Breast epithelium (tissue), 4 donors: ENCODE measurements at regions of chr6 and their contacts with region 1.

Region 1: DNA sequence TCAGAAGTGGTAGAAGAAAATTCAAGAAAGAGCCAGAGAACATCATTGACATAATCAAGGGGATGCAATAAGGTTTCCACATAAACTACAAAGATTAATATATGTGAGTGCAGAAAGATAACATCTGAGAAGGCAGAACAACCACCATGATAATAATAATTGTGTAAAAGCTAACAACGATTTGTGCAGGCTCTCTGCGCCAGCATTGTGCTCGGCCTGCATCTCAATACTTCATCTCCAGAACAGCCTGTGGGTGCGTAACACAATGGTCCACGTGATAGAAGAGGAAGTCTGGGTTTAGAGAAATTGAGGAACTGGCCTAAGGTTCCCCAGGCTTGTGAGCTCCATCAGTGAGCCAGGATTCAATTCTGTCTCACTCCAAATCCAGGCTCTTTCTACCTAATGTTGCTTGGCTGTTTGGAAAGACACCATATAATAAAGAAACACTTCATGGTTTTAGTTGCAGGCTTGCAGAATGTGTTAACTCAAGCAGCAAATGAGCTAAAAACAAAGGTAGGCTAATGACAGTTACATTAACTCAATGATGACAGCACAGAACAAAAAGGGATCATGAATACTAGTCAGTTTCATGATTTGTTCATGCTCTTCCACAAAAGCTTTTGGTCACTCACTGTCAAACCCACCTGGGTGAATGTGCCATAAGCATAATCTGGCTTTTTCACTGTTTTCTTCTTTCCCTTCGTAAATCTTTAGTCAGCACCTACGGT is 71.2 kb downstream of the LY86 start:
- DNase-seq: no peak
- H3K4me3 ChIP-seq: no peak overlapping the region
- H3K27ac ChIP-seq: no peak overlapping the region
- H3K4me1 ChIP-seq: no peaks in the 10 kb centered on the region
- H3K27me3 ChIP-seq: no peaks in the 10 kb centered on the region
- CTCF ChIP-seq: no peak
- POLR2A ChIP-seq: no peak

Region 2: GRCh38 chr6:5135788-5136376 is 1523.9 kb before region 1 on chr6:
- intact Hi-C with region 1: loop called (anchors 5 kb)
- DNase-seq: no peak
- H3K4me3 ChIP-seq: no peak overlapping the region
- H3K27ac ChIP-seq: no peak overlapping the region
- H3K4me1 ChIP-seq: no peaks in the 10 kb centered on the region
- H3K27me3 ChIP-seq: no peaks in the 10 kb centered on the region
- CTCF ChIP-seq: peak; percentile 19 to 42 (median 26)
- POLR2A ChIP-seq: no peak

Region 3: DNA sequence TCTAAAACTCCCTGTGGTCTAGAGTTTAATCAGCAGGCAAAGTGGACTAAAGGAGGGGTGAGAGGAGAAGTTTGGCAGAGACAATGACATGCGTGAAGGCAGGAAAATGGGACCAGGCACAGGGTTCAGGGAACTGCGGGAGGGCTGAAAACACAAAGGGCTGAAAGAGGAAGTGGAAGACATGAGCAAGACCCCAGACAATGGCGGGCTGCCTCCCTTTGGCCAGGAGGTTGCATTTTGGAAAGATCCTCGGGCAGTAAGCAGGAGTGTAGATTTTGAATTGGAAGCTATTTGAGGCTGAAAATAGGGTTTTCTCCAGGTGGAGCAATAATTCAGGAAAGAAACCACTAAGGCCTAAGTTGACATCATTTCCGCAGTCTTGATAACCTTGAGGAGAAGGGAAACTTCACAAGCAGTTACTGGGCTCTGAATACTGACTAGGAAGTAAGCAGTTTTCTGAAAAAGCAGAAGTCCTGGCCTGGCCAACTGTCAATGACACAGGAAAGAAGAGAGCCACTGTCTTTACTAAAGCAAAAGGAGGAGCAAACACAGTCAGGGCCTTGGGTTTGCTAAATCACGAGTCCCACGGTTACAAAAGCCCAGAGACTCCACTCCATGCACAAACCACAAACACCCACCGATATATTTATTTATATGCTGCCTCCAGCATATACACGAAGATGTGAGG is 67.8 kb before region 1 on chr6:
- intact Hi-C with region 1: no loop called
- DNase-seq: no peak
- H3K4me3 ChIP-seq: no peak overlapping the region
- H3K27ac ChIP-seq: peak overlapping the region in 1 of 2 donors; percentile 19
- H3K4me1 ChIP-seq: no peaks in the 10 kb centered on the region
- H3K27me3 ChIP-seq: no peaks in the 10 kb centered on the region
- CTCF ChIP-seq: no peak
- POLR2A ChIP-seq: no peak

Region 4: GRCh38 chr6:6631534-6632276 is 28.1 kb before region 1 on chr6:
- intact Hi-C with region 1: no loop called
- DNase-seq: no peak
- H3K4me3 ChIP-seq: no peak overlapping the region
- H3K27ac ChIP-seq: no peak overlapping the region
- H3K4me1 ChIP-seq: no peaks in the 10 kb centered on the region
- H3K27me3 ChIP-seq: no peaks in the 10 kb centered on the region
- CTCF ChIP-seq: no peak
- POLR2A ChIP-seq: no peak

Region 5: GRCh38 chr6:6721606-6722005 is 61.8 kb after region 1 on chr6:
- intact Hi-C with region 1: loop called (anchors 2 kb)
- DNase-seq: no peak
- H3K4me3 ChIP-seq: no peak overlapping the region
- H3K27ac ChIP-seq: no peak overlapping the region
- H3K4me1 ChIP-seq: peaks cover 0 to 3% of the 10 kb centered on the region in 2 donors
- H3K27me3 ChIP-seq: no peaks in the 10 kb centered on the region
- CTCF ChIP-seq: no peak
- POLR2A ChIP-seq: no peak

Region 6: GRCh38 chr6:7254980-7255835 is 595.4 kb after region 1 on chr6:
- intact Hi-C with region 1: no loop called
- DNase-seq: no peak
- H3K4me3 ChIP-seq: no peak overlapping the region
- H3K27ac ChIP-seq: peak overlapping the region in 1 of 2 donors; percentile 39
- H3K4me1 ChIP-seq: no peaks in the 10 kb centered on the region
- H3K27me3 ChIP-seq: no peaks in the 10 kb centered on the region
- CTCF ChIP-seq: no peak
- POLR2A ChIP-seq: no peak

Region 7: DNA sequence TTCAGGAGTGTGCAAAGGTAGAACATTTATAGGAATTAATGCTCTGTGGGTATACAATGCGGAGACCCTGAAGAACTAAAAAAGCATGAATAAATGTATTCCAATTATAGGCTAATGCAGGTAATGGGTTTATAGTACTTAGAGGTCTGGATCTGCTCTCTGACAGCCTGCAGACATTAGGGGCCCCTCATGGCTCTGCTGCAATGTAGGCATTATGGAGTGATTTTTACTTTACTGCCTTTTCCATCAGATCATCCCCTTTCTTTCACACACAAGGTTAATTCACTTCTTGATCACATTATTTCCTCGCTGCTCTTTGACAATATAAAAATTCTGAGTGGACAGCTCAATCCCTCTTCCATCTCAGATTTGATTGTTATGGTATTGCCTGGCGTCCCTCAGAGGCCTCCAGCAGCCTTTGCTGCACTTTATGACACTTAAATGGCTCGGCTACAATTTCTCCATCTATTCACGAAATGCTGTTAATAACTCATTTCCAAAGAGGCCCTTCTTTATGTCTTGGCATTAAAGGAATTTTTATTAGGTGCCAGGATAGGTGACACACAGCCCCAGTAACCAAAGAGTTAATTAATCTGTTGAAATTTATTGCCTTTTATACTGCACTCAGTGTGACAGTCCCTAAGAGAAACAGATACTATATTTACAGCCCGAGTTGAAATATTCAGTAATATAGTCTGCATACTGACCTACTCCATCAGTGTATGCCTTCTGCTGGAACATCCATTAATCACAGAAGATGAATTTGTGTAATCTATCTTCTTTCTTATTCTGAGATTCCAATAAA is 1809.0 kb after region 1 on chr6:
- intact Hi-C with region 1: no loop called
- DNase-seq: no peak
- H3K4me3 ChIP-seq: no peak overlapping the region
- H3K27ac ChIP-seq: no peak overlapping the region
- H3K4me1 ChIP-seq: no peaks in the 10 kb centered on the region
- H3K27me3 ChIP-seq: no peaks in the 10 kb centered on the region
- CTCF ChIP-seq: no peak
- POLR2A ChIP-seq: no peak